ENCODE measurements at regions of chr1 and their contacts with region 1.

Region 1: GRCh38 chr1:167599957-167600581 is 30.0 kb upstream of the RCSD1 start:
- DNase-seq: peak in 33 of 35 experiments; percentile 12 to 79 (median 35)
- ATAC-seq: peak; percentile 72 to 94 (median 76)
- H3K4me3 ChIP-seq: no peak overlapping the region
- H3K4me3 Mint-ChIP-seq: peak overlapping the region; percentile 26 to 79 (median 49)
- H3K27ac ChIP-seq: no peak overlapping the region
- H3K27ac Mint-ChIP-seq: peak overlapping the region; percentile 53 to 80
- H3K4me1 ChIP-seq: peaks cover 32 to 34% of the 10 kb centered on the region in 2 experiments
- H3K4me1 Mint-ChIP-seq: peaks cover 38 to 43% (median 42%) of the 10 kb centered on the region in 3 donors
- H3K27me3 ChIP-seq: no peaks in the 10 kb centered on the region
- H3K27me3 Mint-ChIP-seq: peaks cover 0 to 2% of the 10 kb centered on the region in 2 donors

Region 2: GRCh38 chr1:167627865-167628641 is 28.0 kb after region 1 on chr1:
- CTCF ChIA-PET with region 1: interaction called, 6 to 17 read pairs
- POLR2A ChIA-PET with region 1: interaction called in 1 of 2 experiments, 12 read pairs
- DNase-seq: peak; percentile 56 to 88 (median 70)
- ATAC-seq: peak; percentile 77 to 85 (median 79)
- H3K4me3 ChIP-seq: peak overlapping the region in 1 of 2 donors; percentile 5
- H3K4me3 Mint-ChIP-seq: peak overlapping the region; percentile 90 to 92 (median 91)
- H3K27ac ChIP-seq: peak overlapping the region; percentile 87
- H3K27ac Mint-ChIP-seq: peak overlapping the region; percentile 99
- H3K4me1 ChIP-seq: peaks cover 34 to 51% of the 10 kb centered on the region in 2 experiments
- H3K4me1 Mint-ChIP-seq: peaks cover 51 to 71% (median 68%) of the 10 kb centered on the region in 3 donors
- H3K27me3 ChIP-seq: no peaks in the 10 kb centered on the region
- H3K27me3 Mint-ChIP-seq: no peaks in the 10 kb centered on the region

Region 3: GRCh38 chr1:167635156-167635648 is 35.1 kb after region 1 on chr1:
- CTCF ChIA-PET with region 1: interaction called, 50 to 121 read pairs
- POLR2A ChIA-PET with region 1: interaction called in 1 of 2 experiments, 5 read pairs
- DNase-seq: no peak
- ATAC-seq: no peak
- H3K4me3 ChIP-seq: no peak overlapping the region
- H3K4me3 Mint-ChIP-seq: peak overlapping the region in 1 of 3 donors; percentile 92
- H3K27ac ChIP-seq: peak overlapping the region; percentile 49
- H3K27ac Mint-ChIP-seq: peak overlapping the region; percentile 94 to 97
- H3K4me1 ChIP-seq: peaks cover 64 to 82% of the 10 kb centered on the region in 2 experiments
- H3K4me1 Mint-ChIP-seq: peaks cover 85 to 95% (median 89%) of the 10 kb centered on the region in 3 donors
- H3K27me3 ChIP-seq: no peaks in the 10 kb centered on the region
- H3K27me3 Mint-ChIP-seq: no peaks in the 10 kb centered on the region

Region 4: GRCh38 chr1:167641786-167642500 is 41.9 kb after region 1 on chr1:
- CTCF ChIA-PET with region 1: interaction called, 50 to 121 read pairs
- POLR2A ChIA-PET with region 1: interaction called in 1 of 2 experiments, 5 read pairs
- DNase-seq: peak in 5 of 35 experiments; percentile 25 to 49 (median 46)
- ATAC-seq: peak; percentile 11 to 43 (median 15)
- H3K4me3 ChIP-seq: no peak overlapping the region
- H3K4me3 Mint-ChIP-seq: peak overlapping the region; percentile 17 to 64 (median 25)
- H3K27ac ChIP-seq: peak overlapping the region; percentile 19
- H3K27ac Mint-ChIP-seq: peak overlapping the region; percentile 65 to 79
- H3K4me1 ChIP-seq: peaks cover 41 to 96% of the 10 kb centered on the region in 2 experiments
- H3K4me1 Mint-ChIP-seq: peaks cover 97 to 98% (median 98%) of the 10 kb centered on the region in 3 donors
- H3K27me3 ChIP-seq: no peaks in the 10 kb centered on the region
- H3K27me3 Mint-ChIP-seq: no peaks in the 10 kb centered on the region

Region 5: DNA sequence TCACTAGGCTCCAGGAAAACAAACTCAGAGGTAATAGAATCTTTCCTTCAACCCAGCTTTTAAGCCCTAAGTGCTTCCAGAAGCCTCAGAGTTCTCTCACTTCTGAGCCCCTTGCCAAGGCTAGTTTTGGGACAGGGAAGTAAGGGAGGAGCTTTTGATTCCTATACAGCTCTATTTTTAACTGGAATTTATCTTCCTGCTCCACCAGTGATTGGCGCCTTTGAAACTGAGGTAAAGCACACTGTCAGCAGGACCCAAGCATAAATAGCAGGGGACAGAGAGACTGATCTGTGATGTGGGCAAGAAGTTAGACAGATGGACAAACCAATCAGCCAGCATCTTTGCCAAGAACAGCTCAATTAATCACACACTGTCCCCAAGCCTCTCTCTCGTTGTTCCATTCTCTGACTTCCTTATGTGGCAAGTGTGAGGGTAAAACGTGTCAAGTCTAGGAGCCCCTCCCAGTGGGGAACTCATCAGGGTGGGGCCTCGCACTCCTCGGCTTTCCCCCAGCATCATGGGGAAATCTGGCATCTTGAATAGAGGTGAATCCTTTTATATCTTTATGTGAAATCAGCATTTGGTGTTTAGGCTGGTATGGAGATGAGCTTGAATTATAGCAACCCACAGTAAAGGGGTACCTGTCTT is 81.5 kb after region 1 on chr1:
- CTCF ChIA-PET with region 1: interaction called, 41 to 83 read pairs
- POLR2A ChIA-PET with region 1: no interaction called
- DNase-seq: no peak
- ATAC-seq: no peak
- H3K4me3 ChIP-seq: no peak overlapping the region
- H3K4me3 Mint-ChIP-seq: no peak overlapping the region
- H3K27ac ChIP-seq: peak overlapping the region; percentile 39
- H3K27ac Mint-ChIP-seq: peak overlapping the region; percentile 79 to 87
- H3K4me1 ChIP-seq: peaks cover 0 to 35% of the 10 kb centered on the region in 2 experiments
- H3K4me1 Mint-ChIP-seq: peaks cover 12 to 17% (median 14%) of the 10 kb centered on the region in 3 donors
- H3K27me3 ChIP-seq: no peaks in the 10 kb centered on the region
- H3K27me3 Mint-ChIP-seq: no peaks in the 10 kb centered on the region

Region 6: GRCh38 chr1:167687919-167688519 is 88.0 kb after region 1 on chr1:
- CTCF ChIA-PET with region 1: interaction called, 41 to 83 read pairs
- POLR2A ChIA-PET with region 1: interaction called, 3 to 5 read pairs
- DNase-seq: peak; percentile 8 to 88 (median 67)
- ATAC-seq: peak; percentile 73 to 83 (median 78)
- H3K4me3 ChIP-seq: no peak overlapping the region
- H3K4me3 Mint-ChIP-seq: no peak overlapping the region
- H3K27ac ChIP-seq: no peak overlapping the region
- H3K27ac Mint-ChIP-seq: peak overlapping the region; percentile 31 to 66
- H3K4me1 ChIP-seq: peaks cover 0 to 6% of the 10 kb centered on the region in 2 experiments
- H3K4me1 Mint-ChIP-seq: peaks cover 15 to 31% (median 19%) of the 10 kb centered on the region in 3 donors
- H3K27me3 ChIP-seq: no peaks in the 10 kb centered on the region
- H3K27me3 Mint-ChIP-seq: no peaks in the 10 kb centered on the region

Region 7: DNA sequence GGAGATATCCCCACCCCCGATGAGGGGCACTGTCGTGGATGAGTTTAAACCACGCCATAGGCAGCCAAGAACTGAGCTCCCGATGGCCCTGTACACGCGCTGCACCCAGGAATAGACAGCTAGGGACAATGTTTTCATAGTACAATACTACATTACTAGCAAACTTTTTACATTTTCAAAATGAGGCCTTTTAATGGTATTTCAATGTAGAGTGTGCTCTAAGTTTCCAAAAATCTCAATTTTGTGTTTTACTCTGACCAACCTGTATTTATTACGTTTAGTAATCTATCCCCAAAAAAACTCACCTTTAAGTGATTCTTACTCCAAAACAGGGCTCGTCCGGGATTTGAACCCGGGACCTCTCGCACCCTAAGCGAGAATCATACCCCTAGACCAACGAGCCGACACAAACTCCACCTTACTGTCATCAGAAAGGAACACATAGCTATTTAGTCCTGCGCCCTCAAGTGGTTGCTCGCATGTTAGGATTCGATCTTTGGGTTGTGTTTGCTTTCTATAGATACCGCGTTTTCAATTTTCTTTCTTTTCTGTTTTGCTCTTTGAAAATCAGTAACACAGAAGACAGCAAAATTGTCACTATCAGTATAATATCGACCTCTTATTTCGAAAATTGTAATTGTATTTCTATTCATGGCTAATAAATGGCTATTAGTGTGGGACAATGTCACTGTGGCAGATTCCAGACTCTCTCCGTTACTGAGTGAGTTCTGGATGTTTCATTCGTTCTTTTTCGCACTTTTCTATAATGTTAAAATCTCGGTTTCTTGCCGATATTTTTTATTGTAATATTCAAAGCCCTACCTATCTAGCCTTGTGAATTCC is 115.3 kb after region 1 on chr1:
- CTCF ChIA-PET with region 1: interaction called in 1 of 2 experiments, 10 read pairs
- POLR2A ChIA-PET with region 1: no interaction called
- DNase-seq: peak; percentile 70 to 94 (median 83)
- ATAC-seq: peak; percentile 58 to 64 (median 61)
- H3K4me3 ChIP-seq: peak overlapping the region; percentile 70 to 91
- H3K4me3 Mint-ChIP-seq: peak overlapping the region; percentile 82 to 87 (median 83)
- H3K27ac ChIP-seq: peak overlapping the region; percentile 39
- H3K27ac Mint-ChIP-seq: peak overlapping the region; percentile 79 to 91
- H3K4me1 ChIP-seq: peaks cover 15 to 30% of the 10 kb centered on the region in 2 experiments
- H3K4me1 Mint-ChIP-seq: peaks cover 43 to 48% (median 46%) of the 10 kb centered on the region in 3 donors
- H3K27me3 ChIP-seq: no peaks in the 10 kb centered on the region
- H3K27me3 Mint-ChIP-seq: peaks cover 0 to 6% of the 10 kb centered on the region in 2 donors